PC-3 (cell line): ENCODE measurements at regions of chr10 and their contacts with region 1.

Region 1: DNA sequence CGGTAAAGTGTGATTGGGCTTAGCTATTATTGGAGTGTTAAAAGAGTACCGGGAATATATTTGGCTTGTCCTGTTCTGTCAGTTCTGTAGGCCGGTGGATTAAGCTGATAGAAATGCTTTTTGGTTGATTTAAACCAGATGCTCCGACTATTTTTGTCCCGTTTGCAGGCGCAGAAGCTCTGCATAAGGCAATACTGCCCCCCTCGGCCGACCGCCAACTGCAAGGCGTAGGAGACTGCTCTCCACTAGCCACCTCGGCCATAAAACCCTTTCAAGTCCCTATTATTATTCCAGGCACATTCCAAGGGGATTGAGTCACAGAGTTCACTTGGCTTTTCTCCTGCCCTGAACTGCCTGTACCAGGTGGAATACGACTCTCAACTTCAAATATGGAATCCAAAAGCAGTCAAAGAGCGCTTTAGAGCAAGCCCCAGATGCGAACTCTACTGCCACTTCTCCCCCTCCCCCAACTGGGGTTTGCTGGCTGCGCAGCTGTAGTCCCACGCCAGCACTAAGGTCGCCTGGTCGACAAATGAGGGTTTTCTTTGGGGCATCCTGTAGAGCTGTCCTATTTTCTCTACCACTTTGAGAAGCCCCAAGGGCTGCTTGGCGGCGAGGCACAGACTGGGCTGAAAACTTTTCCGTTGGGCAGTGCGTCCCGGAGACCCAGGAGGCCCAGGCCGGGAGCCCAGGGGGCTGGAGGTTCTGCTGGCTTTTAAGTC is 108.3 kb downstream of the REEP3 start:
- DNase-seq: peak; percentile 100
- ATAC-seq: peak; percentile 55
- H3K4me3 ChIP-seq: peak overlapping the region; percentile 73
- H3K27ac ChIP-seq: peak overlapping the region; percentile 95
- H3K4me1 ChIP-seq: peaks cover 52% of the 10 kb centered on the region
- H3K27me3 ChIP-seq: no peaks in the 10 kb centered on the region
- CTCF ChIP-seq: peak; percentile 98

Region 2: GRCh38 chr10:63236113-63236935 is 393.2 kb before region 1 on chr10:
- CTCF ChIA-PET with region 1: interaction called, 3 read pairs
- POLR2A ChIA-PET with region 1: interaction called, 11 read pairs
- intact Hi-C with region 1: no loop called
- DNase-seq: peak; percentile 100
- ATAC-seq: peak; percentile 93
- H3K4me3 ChIP-seq: peak overlapping the region; percentile 41
- H3K27ac ChIP-seq: peak overlapping the region; percentile 86
- H3K4me1 ChIP-seq: peaks cover 56% of the 10 kb centered on the region
- H3K27me3 ChIP-seq: no peaks in the 10 kb centered on the region
- CTCF ChIP-seq: no peak

Region 3: GRCh38 chr10:63416376-63416775 is 213.1 kb before region 1 on chr10:
- CTCF ChIA-PET with region 1: no interaction called
- POLR2A ChIA-PET with region 1: no interaction called
- intact Hi-C with region 1: loop called (anchors 5 kb)
- DNase-seq: no peak
- ATAC-seq: no peak
- H3K4me3 ChIP-seq: no peak overlapping the region
- H3K27ac ChIP-seq: no peak overlapping the region
- H3K4me1 ChIP-seq: peaks cover 43% of the 10 kb centered on the region
- H3K27me3 ChIP-seq: no peaks in the 10 kb centered on the region
- CTCF ChIP-seq: no peak

Region 4: DNA sequence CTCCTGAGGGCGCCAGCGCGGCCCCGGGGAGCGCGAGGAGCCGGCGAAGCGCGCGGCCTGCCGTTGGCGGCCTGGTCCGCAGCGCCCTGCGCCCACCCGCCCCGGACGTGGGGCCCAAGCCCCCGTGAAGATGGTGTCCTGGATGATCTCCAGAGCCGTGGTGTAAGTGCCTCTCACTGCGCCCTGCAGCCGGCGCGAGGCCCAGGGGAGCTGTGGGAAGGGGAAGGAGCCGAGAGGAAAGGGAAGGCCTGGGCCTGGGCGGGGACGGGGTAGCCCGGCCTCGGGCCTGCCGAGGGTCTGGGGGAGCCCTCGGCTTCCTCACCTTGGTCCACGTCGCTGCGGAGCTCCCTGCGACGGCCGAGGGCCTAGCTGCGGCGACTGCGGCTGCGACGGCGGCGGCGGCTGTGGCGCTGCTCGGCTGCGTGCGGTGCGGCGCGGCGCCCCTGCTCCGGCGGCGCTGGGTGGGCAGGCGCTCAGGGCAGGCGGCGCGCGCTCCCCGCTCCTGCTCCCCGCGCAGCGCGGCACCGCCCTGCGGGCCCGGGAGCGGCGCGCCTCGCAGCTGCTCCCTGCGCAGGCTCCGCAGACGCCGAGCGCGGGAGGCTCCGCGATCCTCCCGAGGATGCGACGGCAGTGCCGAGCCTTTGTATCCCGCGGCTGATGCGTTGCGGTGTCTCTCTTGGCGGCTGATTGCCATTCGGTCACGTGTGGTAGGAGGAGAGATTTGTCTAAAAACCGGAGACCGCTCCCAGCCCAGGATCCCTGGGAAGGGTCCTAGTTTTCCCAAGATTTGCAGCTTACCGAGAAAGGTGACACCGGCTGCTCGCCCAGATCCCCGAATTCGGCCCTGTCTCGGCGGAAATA is 107.9 kb before region 1 on chr10:
- CTCF ChIA-PET with region 1: interaction called, 3 read pairs
- POLR2A ChIA-PET with region 1: interaction called, 5 read pairs
- intact Hi-C with region 1: loop called (anchors 1 kb)
- DNase-seq: peak; percentile 94
- ATAC-seq: peak; percentile 58
- H3K4me3 ChIP-seq: peak overlapping the region; percentile 75
- H3K27ac ChIP-seq: peak overlapping the region; percentile 85
- H3K4me1 ChIP-seq: peaks cover 65% of the 10 kb centered on the region
- H3K27me3 ChIP-seq: no peaks in the 10 kb centered on the region
- CTCF ChIP-seq: no peak

Region 5: GRCh38 chr10:63614371-63614891 is 15.1 kb before region 1 on chr10:
- CTCF ChIA-PET with region 1: no interaction called
- POLR2A ChIA-PET with region 1: interaction called, 5 read pairs
- intact Hi-C with region 1: loop called (anchors 1 kb)
- DNase-seq: no peak
- ATAC-seq: no peak
- H3K4me3 ChIP-seq: no peak overlapping the region
- H3K27ac ChIP-seq: no peak overlapping the region
- H3K4me1 ChIP-seq: peaks cover 9% of the 10 kb centered on the region
- H3K27me3 ChIP-seq: no peaks in the 10 kb centered on the region
- CTCF ChIP-seq: no peak

Region 6: DNA sequence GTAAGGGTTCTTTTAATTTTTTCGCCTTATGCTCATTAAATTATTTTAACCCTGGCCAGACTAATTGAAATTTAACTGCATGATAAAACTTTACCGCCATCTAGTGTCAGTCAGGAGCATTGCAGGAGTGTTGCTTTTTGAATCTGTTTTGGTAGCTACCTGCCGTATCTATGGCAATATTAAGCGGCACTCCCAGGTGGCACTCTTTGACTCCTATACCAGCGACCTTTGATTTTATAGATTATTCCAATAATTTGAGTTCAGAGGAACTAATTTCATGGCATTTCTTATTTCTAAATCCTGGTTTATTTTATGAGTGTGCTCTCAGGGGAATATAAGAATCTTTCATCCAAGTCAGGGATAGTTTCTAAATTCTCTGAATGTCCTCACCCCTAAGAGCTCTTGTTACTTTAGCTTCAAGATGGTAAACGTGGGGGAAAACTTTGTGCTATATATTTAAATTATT is 90.6 kb after region 1 on chr10:
- CTCF ChIA-PET with region 1: interaction called, 26 read pairs
- POLR2A ChIA-PET with region 1: interaction called, 12 read pairs
- intact Hi-C with region 1: loop called (anchors 1 kb)
- DNase-seq: peak; percentile 97
- ATAC-seq: peak; percentile 53
- H3K4me3 ChIP-seq: no peak overlapping the region
- H3K27ac ChIP-seq: no peak overlapping the region
- H3K4me1 ChIP-seq: peaks cover 29% of the 10 kb centered on the region
- H3K27me3 ChIP-seq: no peaks in the 10 kb centered on the region
- CTCF ChIP-seq: peak; percentile 100